ENCODE measurements at regions of chr19 and their contacts with region 1.

Region 1: GRCh38 chr19:23249911-23250649 is at the start of gene ZNF724:
- DNase-seq: peak; percentile 95
- H3K4me3 Mint-ChIP-seq: peak within 1 kb of the TSS; percentile 97
- H3K27ac Mint-ChIP-seq: peak within 1 kb of the TSS; percentile 94
- H3K4me1 Mint-ChIP-seq: peaks cover 14% of the 10 kb centered on the region
- H3K27me3 Mint-ChIP-seq: no peaks in the 10 kb centered on the region
- total RNA-seq, gene ZNF724: 12.9 to 13.3 TPM

Region 2: GRCh38 chr19:22052644-22053013 is 1197.5 kb before region 1 on chr19:
- CTCF ChIA-PET with region 1: no interaction called
- intact Hi-C with region 1: loop called (anchors 1 kb)
- DNase-seq: peak; percentile 26
- H3K4me3 Mint-ChIP-seq: peak overlapping the region; percentile 94
- H3K27ac Mint-ChIP-seq: peak overlapping the region; percentile 85
- H3K4me1 Mint-ChIP-seq: no peaks in the 10 kb centered on the region
- H3K27me3 Mint-ChIP-seq: no peaks in the 10 kb centered on the region

Region 3: DNA sequence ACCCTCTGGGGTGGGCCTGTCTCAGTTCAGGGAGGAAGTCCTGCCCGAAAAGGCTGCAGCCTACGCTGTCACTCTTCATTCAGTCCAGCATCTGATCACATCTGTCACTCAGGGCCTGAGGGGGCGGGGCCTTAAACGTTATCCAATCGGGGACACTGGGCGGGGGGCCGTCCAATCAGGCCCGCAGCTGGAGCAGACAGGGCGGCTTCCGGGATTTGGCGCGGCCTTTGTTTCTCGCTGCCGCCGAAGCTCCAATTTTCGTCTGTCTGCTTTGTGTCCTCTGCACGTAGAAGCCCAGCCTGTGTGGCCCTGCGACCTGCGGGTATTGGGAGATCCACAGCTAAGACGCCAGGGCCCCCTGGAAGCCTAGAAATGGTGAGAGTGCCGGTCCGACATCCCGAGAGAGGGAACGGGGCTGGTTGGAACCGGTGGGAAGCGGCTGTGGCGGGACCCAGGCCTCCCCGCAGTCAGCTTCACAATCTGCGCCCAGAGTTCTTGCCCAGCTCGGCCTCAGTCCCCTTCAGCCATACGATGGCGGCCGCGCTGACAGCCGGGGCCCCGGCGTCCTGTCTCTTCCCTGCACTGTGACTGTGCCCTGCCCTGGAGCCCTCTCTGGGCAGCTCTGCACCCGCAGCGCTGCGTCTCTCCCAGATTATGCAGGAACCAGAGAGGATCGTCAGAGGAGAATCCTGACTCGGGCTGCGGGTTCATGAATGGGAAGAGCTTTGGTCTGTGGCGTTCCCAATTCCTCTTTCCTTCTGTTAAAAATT is 133.1 kb before region 1 on chr19 and contains the start of gene ZNF730:
- CTCF ChIA-PET with region 1: no interaction called
- intact Hi-C with region 1: loop called (anchors 10 kb)
- DNase-seq: peak; percentile 64
- H3K4me3 Mint-ChIP-seq: peak within 1 kb of the TSS; percentile 73
- H3K27ac Mint-ChIP-seq: no peak within 1 kb of the TSS
- H3K4me1 Mint-ChIP-seq: peaks cover 5% of the 10 kb centered on the region
- H3K27me3 Mint-ChIP-seq: peaks cover 28% of the 10 kb centered on the region
- total RNA-seq, gene ZNF730: 0.52 to 0.81 TPM

Region 4: DNA sequence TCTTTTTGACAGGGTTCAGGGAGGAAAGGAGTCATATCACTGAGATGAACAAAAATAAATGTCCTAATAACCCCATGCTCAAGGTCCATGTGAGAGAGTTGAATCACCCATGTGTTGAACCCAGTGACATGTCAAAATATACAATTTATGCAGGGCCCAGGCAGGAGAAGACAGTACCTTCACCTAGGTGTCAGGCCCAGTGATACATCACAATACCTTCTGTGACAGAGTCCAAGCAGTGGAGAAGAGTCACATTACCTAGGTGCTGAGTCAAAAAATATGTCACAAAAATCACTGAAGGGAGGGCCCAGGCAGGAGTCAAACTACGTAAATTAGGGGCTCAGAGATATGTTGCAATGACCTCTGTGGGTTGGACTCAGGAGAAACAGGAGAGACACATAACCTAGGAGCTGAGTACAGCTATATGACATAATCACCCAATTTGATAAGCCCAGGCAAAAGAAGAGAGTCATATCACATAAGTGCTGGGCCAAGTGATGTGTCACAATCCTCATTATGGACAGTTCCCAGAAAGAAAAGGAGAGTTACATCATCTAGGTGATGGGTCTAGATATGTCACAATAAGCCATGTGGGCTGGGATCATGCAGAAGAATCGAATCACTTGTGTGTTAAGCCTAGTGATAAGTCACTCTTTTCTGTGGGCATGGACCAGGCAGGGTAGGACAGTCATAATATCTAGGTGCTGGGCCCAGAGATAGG is 13.9 kb after region 1 on chr19:
- CTCF ChIA-PET with region 1: no interaction called
- intact Hi-C with region 1: loop called (anchors 1 kb)
- DNase-seq: peak; percentile 17
- H3K4me3 Mint-ChIP-seq: no peak overlapping the region
- H3K27ac Mint-ChIP-seq: no peak overlapping the region
- H3K4me1 Mint-ChIP-seq: peaks cover 10% of the 10 kb centered on the region
- H3K27me3 Mint-ChIP-seq: no peaks in the 10 kb centered on the region

Region 5: GRCh38 chr19:23273590-23274413 is 23.7 kb after region 1 on chr19:
- CTCF ChIA-PET with region 1: interaction called, 3 read pairs
- intact Hi-C with region 1: loop called (anchors 1 kb)
- DNase-seq: peak; percentile 96
- H3K4me3 Mint-ChIP-seq: peak overlapping the region; percentile 93
- H3K27ac Mint-ChIP-seq: peak overlapping the region; percentile 92
- H3K4me1 Mint-ChIP-seq: peaks cover 28% of the 10 kb centered on the region
- H3K27me3 Mint-ChIP-seq: no peaks in the 10 kb centered on the region

Region 6: DNA sequence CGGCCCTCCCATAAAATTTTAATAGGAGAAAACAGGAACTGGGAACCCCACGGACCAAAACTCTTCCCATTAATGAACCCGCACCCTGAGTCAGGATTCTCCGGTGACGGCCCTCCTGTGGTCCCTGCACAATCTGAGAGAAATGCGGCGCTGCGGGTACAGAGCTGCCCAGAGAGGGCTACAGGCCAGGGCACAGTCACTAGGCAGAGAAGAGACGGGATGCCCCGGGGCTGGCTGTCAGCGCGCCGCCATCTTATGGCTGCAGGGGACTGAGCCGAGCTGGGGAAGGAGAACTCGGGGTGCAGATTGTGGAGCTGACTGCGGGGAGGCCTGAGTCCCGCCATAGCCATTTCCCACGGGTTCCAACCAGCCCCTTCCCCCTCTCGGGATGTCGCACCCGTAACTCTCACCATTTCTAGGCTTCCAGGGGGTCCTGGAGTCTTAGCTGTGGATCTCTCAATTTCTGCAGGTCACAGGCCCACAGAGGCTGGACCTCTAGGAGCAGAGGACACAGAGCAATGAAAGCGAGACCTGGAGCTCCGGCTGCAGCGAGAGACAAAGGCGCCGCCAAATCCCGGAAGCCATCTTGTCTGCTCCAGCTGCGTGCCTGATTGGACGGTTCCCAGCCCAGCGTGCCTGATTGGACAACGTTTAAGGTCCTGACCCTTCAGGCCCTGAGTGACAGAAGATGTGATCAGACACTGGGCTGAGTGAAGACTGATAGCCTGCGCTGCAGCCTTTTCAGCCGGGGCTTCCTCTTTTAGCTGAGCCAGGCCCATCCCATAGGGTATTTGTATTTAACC is 436.7 kb after region 1 on chr19 and contains the start of gene ZNF675:
- CTCF ChIA-PET with region 1: no interaction called
- intact Hi-C with region 1: loop called (anchors 5 kb)
- DNase-seq: peak; percentile 94
- H3K4me3 Mint-ChIP-seq: peak within 1 kb of the TSS; percentile 96
- H3K27ac Mint-ChIP-seq: peak within 1 kb of the TSS; percentile 97
- H3K4me1 Mint-ChIP-seq: peaks cover 44% of the 10 kb centered on the region
- H3K27me3 Mint-ChIP-seq: no peaks in the 10 kb centered on the region
- total RNA-seq, gene ZNF675: 23.8 to 25.2 TPM